CD8-positive, alpha-beta memory T cell (primary cell): ENCODE measurements at regions of chr11 and their contacts with region 1.

Region 1: GRCh38 chr11:11157185-11157584 is 195.9 kb downstream of the CSNK2A3 start:
- DNase-seq: peak; percentile 21 to 73 (median 28)
- H3K4me3 ChIP-seq: no peak overlapping the region
- H3K4me3 Mint-ChIP-seq: peak overlapping the region in 1 of 7 donors; percentile 12
- H3K27ac ChIP-seq: no peak overlapping the region
- H3K27ac Mint-ChIP-seq: peak overlapping the region in 2 of 8 donors; percentile 24 to 81
- H3K4me1 ChIP-seq: peaks cover 18% of the 10 kb centered on the region
- H3K4me1 Mint-ChIP-seq: peaks cover 10 to 15% (median 11%) of the 10 kb centered on the region in 3 donors
- H3K27me3 ChIP-seq: no peaks in the 10 kb centered on the region
- H3K27me3 Mint-ChIP-seq: peaks cover 3 to 12% of the 10 kb centered on the region in 2 donors

Region 2: DNA sequence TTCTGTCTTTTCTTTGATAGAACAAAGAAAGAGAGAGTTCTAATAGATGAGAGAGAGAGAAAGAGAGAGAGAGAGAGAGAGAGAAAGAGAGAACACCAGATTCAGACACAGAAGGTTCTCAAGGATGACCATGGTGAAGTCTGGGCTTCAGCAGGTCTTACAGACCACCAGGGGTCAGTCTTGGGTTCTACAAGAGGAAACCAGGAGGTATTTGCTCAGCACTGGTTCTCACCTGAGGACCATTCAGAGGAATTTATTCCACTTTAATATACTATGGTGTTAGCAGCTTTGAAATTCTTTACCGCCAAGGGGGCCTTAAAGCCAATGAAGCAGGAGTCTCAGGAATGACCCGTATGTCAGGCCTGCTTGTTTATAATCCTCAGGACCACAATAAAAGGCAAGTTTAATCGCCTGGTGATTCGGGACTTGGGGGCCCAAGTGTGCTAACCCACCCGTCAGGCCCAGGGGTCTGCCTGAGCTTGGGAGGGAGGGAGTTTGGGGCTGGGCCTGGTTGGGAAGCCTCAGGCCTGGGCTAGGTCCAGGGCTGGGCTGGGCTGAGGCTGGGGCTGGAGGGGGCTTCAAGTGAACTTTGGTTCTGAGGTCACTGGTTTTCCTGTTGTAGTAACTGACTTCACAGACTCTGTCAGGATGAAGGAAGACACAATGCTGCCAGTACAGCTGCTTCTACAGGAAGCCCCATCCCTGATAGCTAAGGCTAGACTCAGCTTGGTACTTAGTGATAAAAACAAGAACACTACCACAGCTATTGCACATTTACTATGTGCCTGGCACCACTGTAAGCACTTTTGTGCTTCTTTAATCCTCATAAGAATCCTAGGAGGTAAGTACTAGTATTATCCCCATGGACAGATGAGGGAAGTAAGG is 120.1 kb before region 1 on chr11:
- CTCF ChIA-PET with region 1: interaction called, 114 read pairs
- POLR2A ChIA-PET with region 1: no interaction called
- DNase-seq: peak in 3 of 5 donors; percentile 16 to 55 (median 35)
- H3K4me3 ChIP-seq: no peak overlapping the region
- H3K4me3 Mint-ChIP-seq: no peak overlapping the region
- H3K27ac ChIP-seq: no peak overlapping the region
- H3K27ac Mint-ChIP-seq: peak overlapping the region in 1 of 8 donors; percentile 35
- H3K4me1 ChIP-seq: peaks cover 16% of the 10 kb centered on the region
- H3K4me1 Mint-ChIP-seq: peaks cover 0 to 3% (median 0%) of the 10 kb centered on the region in 3 donors
- H3K27me3 ChIP-seq: no peaks in the 10 kb centered on the region
- H3K27me3 Mint-ChIP-seq: peaks cover 12 to 14% of the 10 kb centered on the region in 2 donors

Region 3: DNA sequence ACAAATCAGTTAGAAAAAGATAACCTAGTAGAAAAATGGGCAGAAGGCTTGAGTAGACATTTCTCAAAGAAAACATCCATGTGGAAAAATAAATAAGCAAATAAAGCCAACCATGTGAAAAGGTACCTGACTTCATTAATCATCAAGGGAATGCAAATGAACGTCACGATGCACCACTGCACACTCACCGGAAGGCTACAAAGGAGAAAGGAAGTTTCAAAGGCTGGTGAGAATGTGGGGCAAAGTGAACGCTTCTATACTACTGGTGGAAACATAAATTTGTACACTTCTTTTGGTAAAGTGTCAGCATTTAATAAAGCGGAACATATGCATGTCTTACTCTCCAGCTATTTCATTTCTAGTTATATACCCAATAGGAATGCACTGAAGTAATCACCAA is 29.1 kb after region 1 on chr11:
- CTCF ChIA-PET with region 1: no interaction called
- POLR2A ChIA-PET with region 1: no interaction called
- DNase-seq: no peak
- H3K4me3 ChIP-seq: no peak overlapping the region
- H3K4me3 Mint-ChIP-seq: no peak overlapping the region
- H3K27ac ChIP-seq: no peak overlapping the region
- H3K27ac Mint-ChIP-seq: no peak overlapping the region
- H3K4me1 ChIP-seq: no peaks in the 10 kb centered on the region
- H3K4me1 Mint-ChIP-seq: no peaks in the 10 kb centered on the region
- H3K27me3 ChIP-seq: no peaks in the 10 kb centered on the region
- H3K27me3 Mint-ChIP-seq: peaks cover 23% of the 10 kb centered on the region in 2 donors

Region 4: DNA sequence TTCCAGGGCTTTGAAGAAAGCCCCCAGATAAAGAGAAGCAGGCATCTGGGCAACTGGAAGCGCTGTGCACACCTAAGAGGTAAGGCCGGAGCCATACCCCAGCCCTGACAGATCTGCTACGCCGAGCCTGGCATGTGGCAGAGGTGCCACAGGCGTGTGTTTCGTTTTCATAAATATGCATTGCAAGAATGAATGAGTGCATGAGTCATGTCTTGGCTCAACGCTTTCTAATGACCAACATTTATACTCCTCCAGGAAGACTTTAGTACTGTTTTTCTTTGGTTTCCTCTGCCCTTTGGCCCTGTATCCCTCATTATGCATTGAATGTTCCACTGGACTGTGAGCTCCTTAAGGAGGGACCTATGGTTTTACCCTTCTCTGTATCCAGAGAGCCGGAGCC is 234.6 kb after region 1 on chr11:
- CTCF ChIA-PET with region 1: no interaction called
- POLR2A ChIA-PET with region 1: no interaction called
- DNase-seq: no peak
- H3K4me3 ChIP-seq: no peak overlapping the region
- H3K4me3 Mint-ChIP-seq: no peak overlapping the region
- H3K27ac ChIP-seq: no peak overlapping the region
- H3K27ac Mint-ChIP-seq: no peak overlapping the region
- H3K4me1 ChIP-seq: no peaks in the 10 kb centered on the region
- H3K4me1 Mint-ChIP-seq: no peaks in the 10 kb centered on the region
- H3K27me3 ChIP-seq: no peaks in the 10 kb centered on the region
- H3K27me3 Mint-ChIP-seq: peaks cover 4 to 30% of the 10 kb centered on the region in 2 donors